GM10248 (cell line): ENCODE measurements at regions of chr20 and their contacts with region 1.

Region 1: GRCh38 chr20:48722737-48723191 is 105.0 kb downstream of the PREX1 start:
- DNase-seq: no peak
- CTCF ChIP-seq: no peak

Region 2: GRCh38 chr20:48772362-48773015 is 49.7 kb after region 1 on chr20:
- CTCF ChIA-PET with region 1: no interaction called
- POLR2A ChIA-PET with region 1: interaction called, 11 read pairs
- DNase-seq: no peak
- CTCF ChIP-seq: no peak